Mammary epithelial cell (primary cell): ENCODE measurements at regions of chr11 and their contacts with region 1.

Region 1: GRCh38 chr11:46392421-46393230 is 1.1 kb upstream of the CHRM4 start:
- DNase-seq: peak; percentile 69
- H3K4me3 ChIP-seq: peak overlapping the region in 2 of 3 experiments; percentile 41 to 42
- H3K27ac ChIP-seq: no peak overlapping the region
- H3K4me1 ChIP-seq: peaks cover 25% of the 10 kb centered on the region
- H3K27me3 ChIP-seq: peaks cover 13% of the 10 kb centered on the region
- CTCF ChIP-seq: no peak

Region 2: GRCh38 chr11:46009647-46010046 is 383.0 kb before region 1 on chr11:
- CTCF ChIA-PET with region 1: no interaction called
- dilution Hi-C with region 1: no loop called
- in situ Hi-C with region 1: no loop called
- intact Hi-C with region 1: no loop called
- DNase-seq: peak; percentile 5
- H3K4me3 ChIP-seq: no peak overlapping the region
- H3K27ac ChIP-seq: no peak overlapping the region
- H3K4me1 ChIP-seq: no peaks in the 10 kb centered on the region
- H3K27me3 ChIP-seq: no peaks in the 10 kb centered on the region
- CTCF ChIP-seq: no peak

Region 3: GRCh38 chr11:46160100-46160499 is 232.5 kb before region 1 on chr11:
- CTCF ChIA-PET with region 1: no interaction called
- dilution Hi-C with region 1: no loop called
- in situ Hi-C with region 1: no loop called
- intact Hi-C with region 1: no loop called
- DNase-seq: no peak
- H3K4me3 ChIP-seq: no peak overlapping the region
- H3K27ac ChIP-seq: no peak overlapping the region
- H3K4me1 ChIP-seq: peaks cover 15% of the 10 kb centered on the region
- H3K27me3 ChIP-seq: no peaks in the 10 kb centered on the region
- CTCF ChIP-seq: peak in 1 of 2 donors; percentile 22

Region 4: GRCh38 chr11:46247664-46248063 is 145.0 kb before region 1 on chr11:
- CTCF ChIA-PET with region 1: interaction called, 46 read pairs
- dilution Hi-C with region 1: no loop called
- in situ Hi-C with region 1: no loop called
- intact Hi-C with region 1: no loop called
- DNase-seq: peak; percentile 66
- H3K4me3 ChIP-seq: no peak overlapping the region
- H3K27ac ChIP-seq: no peak overlapping the region
- H3K4me1 ChIP-seq: peaks cover 26% of the 10 kb centered on the region
- H3K27me3 ChIP-seq: no peaks in the 10 kb centered on the region
- CTCF ChIP-seq: peak; percentile 54 to 70

Region 5: DNA sequence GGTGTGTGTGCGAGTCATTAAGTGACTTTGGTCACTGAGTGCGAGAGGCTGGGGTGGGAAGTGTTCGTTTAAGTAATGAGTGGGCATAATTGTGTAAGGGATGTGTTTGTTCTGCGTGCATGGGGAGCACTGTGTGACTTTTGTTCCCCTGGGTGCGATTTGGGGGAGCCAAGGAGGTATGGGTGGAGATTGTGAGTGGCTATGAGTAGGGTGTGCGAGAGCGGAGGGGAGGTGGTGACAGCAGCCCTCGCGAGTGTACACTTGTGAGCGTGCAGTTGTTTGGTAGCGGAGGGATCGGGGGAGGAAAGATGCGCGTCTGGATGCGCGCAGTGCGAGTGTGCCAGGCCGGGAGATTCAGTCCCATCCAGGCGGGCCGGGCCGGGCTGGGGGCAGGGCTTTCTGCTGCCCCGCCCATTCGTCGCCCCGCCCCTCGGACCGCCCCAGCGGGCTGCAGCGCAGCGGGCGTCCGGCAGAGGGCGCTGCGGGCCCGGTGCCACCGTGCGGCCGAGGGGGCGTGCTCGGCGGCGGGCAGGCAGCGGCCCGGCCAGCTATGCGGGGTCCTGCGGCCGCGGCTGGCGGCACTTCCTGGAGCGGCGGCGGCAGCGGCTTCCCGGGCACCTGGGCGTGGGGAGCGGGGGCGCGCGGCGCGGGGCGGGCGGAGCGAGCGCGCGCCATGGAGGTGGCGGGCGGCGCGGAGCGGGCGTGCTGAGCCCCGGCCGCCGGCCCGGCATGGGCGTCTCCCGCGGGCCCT is 45.6 kb before region 1 on chr11 and contains the start of gene DGKZ:
- CTCF ChIA-PET with region 1: no interaction called
- dilution Hi-C with region 1: no loop called
- in situ Hi-C with region 1: no loop called
- intact Hi-C with region 1: loop called (anchors 2 kb)
- DNase-seq: peak; percentile 81
- H3K4me3 ChIP-seq: peak within 1 kb of the TSS; percentile 73 to 93 (median 92)
- H3K27ac ChIP-seq: peak within 1 kb of the TSS; percentile 44
- H3K4me1 ChIP-seq: peaks cover 49% of the 10 kb centered on the region
- H3K27me3 ChIP-seq: no peaks in the 10 kb centered on the region
- CTCF ChIP-seq: peak; percentile 52 to 62
- total RNA-seq, gene DGKZ: 80.7 to 83.6 TPM

Region 6: DNA sequence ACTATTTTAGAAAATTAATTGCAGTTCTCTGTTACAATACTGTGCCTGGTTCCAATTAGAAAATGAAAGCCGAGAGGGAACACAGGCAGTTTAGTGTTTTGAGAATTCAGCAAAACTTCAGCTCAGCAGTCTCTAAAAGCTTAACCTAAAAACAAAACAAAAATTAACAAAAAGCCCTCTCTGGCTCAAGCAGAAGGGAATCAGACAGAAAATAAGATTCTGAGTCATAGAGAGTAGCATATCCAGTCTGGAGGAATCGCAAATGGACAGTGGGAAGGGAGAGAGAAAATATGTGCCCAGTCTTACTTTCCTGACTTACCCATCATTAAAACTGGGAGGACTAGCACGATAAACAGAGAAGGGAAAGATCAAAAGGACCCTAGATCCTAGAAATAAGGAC is 37.1 kb after region 1 on chr11:
- CTCF ChIA-PET with region 1: no interaction called
- dilution Hi-C with region 1: loop called (anchors 5 kb)
- in situ Hi-C with region 1: no loop called
- intact Hi-C with region 1: no loop called
- DNase-seq: no peak
- H3K4me3 ChIP-seq: no peak overlapping the region
- H3K27ac ChIP-seq: no peak overlapping the region
- H3K4me1 ChIP-seq: no peaks in the 10 kb centered on the region
- H3K27me3 ChIP-seq: no peaks in the 10 kb centered on the region
- CTCF ChIP-seq: no peak

Region 7: GRCh38 chr11:46529095-46529905 is 136.7 kb after region 1 on chr11:
- CTCF ChIA-PET with region 1: interaction called, 6 read pairs
- dilution Hi-C with region 1: no loop called
- in situ Hi-C with region 1: loop called (anchors 10 kb)
- intact Hi-C with region 1: loop called (anchors 1 kb)
- DNase-seq: peak; percentile 21
- H3K4me3 ChIP-seq: no peak overlapping the region
- H3K27ac ChIP-seq: no peak overlapping the region
- H3K4me1 ChIP-seq: no peaks in the 10 kb centered on the region
- H3K27me3 ChIP-seq: no peaks in the 10 kb centered on the region
- CTCF ChIP-seq: peak; percentile 92 to 95

Region 8: DNA sequence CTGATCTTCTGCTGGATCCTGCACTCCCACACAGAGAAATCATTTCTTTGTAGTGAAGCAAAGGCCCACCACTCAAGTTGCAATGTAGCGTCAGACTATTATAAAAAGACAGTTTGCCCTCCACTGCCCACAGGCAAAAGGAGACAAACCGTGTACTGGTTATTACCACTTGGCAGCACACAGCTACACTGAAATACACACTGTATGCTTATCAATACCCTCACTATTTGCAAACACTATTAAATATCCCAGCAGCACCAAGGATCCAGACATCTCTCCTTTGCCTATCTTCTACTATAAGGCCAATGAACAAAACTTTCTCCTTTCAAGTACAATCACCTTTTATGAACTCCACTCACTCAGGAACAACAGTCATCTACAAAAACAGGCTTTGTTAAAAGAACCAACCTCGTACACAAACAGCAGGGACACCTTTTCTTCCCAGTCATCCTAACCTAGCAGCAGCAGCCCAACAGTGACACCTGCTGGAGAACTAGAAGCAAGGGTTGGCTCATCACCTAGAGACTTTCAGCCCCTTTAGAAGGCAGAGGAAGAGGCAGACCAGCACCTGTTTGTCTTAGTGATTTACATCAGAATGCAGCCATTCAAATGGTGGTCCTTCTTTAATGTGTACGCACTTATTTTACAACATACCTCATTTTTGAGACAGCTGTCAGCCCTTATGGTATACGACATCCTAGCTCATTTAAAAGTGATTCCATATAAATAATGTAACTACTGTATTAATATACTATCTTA is 145.1 kb after region 1 on chr11:
- CTCF ChIA-PET with region 1: no interaction called
- dilution Hi-C with region 1: no loop called
- in situ Hi-C with region 1: loop called (anchors 10 kb)
- intact Hi-C with region 1: loop called (anchors 1 kb)
- DNase-seq: peak; percentile 76
- H3K4me3 ChIP-seq: no peak overlapping the region
- H3K27ac ChIP-seq: peak overlapping the region; percentile 19
- H3K4me1 ChIP-seq: peaks cover 5% of the 10 kb centered on the region
- H3K27me3 ChIP-seq: no peaks in the 10 kb centered on the region
- CTCF ChIP-seq: peak; percentile 98 to 99